Esophagus squamous epithelium (tissue), 5 donors: ENCODE measurements at regions of chr1 and their contacts with region 1.

Region 1: DNA sequence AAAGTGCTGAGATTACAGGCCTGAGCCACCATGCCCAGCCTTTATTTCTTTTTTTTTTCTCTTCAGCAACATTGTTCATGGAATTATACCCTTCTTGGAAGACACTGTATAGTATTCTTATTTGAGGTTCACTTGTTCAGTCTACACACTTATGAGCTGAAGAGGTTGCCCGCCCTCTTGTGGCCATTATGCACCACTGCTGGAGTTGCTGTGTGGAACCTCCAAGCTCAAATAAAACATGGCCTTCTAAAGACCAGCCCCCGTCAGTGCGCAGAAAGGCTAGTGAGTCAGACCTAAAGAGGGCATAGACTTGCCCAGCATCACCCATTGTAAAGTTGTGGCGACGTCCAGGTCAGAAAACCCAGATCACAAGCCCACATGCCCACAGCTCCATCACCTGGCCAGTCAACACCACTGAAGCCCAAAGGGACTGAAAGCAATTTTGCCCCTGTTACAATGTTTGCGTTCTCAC is 20.4 kb downstream of the LURAP1 start:
- DNase-seq: no peak
- H3K4me3 ChIP-seq: no peak overlapping the region
- H3K27ac ChIP-seq: no peak overlapping the region
- H3K4me1 ChIP-seq: peaks cover 0 to 26% (median 5%) of the 10 kb centered on the region in 3 donors
- H3K27me3 ChIP-seq: no peaks in the 10 kb centered on the region
- CTCF ChIP-seq: peak; percentile 56 to 94 (median 94)
- POLR2A ChIP-seq: no peak

Region 2: GRCh38 chr1:46036894-46037839 is 186.3 kb before region 1 on chr1:
- intact Hi-C with region 1: loop called (anchors 2 kb)
- DNase-seq: peak; percentile 22
- H3K4me3 ChIP-seq: no peak overlapping the region
- H3K27ac ChIP-seq: peak overlapping the region in 2 of 4 donors; percentile 12 to 60
- H3K4me1 ChIP-seq: peaks cover 0 to 42% (median 9%) of the 10 kb centered on the region in 3 donors
- H3K27me3 ChIP-seq: no peaks in the 10 kb centered on the region
- CTCF ChIP-seq: peak; percentile 88 to 100 (median 97)
- POLR2A ChIP-seq: no peak